ENCODE measurements at regions of chr15 and their contacts with region 1.

Region 1: GRCh38 chr15:59917504-59918157 is 86.5 kb upstream of the FOXB1 start:
- DNase-seq: peak; percentile 67
- H3K4me3 Mint-ChIP-seq: no peak overlapping the region
- H3K27ac Mint-ChIP-seq: peak overlapping the region; percentile 1
- H3K4me1 Mint-ChIP-seq: peaks cover 27% of the 10 kb centered on the region
- H3K27me3 Mint-ChIP-seq: peaks cover 32% of the 10 kb centered on the region

Region 2: GRCh38 chr15:59725172-59725486 is 192.5 kb before region 1 on chr15:
- intact Hi-C with region 1: loop called (anchors 10 kb)
- DNase-seq: no peak
- H3K4me3 Mint-ChIP-seq: no peak overlapping the region
- H3K27ac Mint-ChIP-seq: no peak overlapping the region
- H3K4me1 Mint-ChIP-seq: no peaks in the 10 kb centered on the region
- H3K27me3 Mint-ChIP-seq: peaks cover 20% of the 10 kb centered on the region

Region 3: DNA sequence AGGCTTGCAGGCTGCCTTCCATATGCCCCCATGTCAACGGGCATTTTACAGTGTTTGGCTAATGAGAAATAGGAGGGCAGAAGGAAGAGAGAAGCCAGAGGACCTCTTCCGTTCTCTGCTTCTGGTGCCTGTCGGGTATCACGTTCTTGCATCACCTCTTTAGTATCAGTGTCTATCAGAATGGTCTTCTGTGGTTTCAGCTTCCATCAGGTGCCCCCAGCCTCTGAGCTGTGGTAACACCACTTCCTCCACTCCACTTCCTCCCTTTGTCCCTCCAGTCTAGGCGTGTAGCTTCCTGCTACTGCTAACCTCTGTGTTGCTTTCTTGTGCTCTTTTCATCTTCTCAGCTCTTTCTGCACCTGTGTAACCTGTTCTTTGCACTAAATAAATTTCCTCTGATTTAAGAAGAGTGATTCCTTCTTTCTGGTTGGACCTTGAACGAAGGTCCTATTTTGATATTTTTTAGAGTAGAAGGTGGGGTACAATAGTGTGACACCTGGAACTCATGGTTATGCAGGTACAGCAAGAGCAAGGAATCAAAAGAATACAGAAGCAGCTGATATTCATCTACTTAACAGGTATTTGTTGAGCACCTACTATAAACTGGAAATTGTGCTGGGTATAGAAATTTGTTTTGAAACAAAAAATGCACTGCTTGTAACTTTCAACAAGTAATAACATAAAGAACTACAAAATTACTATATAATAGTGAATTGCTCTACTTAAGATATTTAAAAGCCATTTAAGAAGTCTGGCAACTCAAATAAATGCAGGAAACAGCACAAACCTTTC is 59.0 kb after region 1 on chr15:
- intact Hi-C with region 1: loop called (anchors 5 kb)
- DNase-seq: peak; percentile 62
- H3K4me3 Mint-ChIP-seq: peak overlapping the region; percentile 61
- H3K27ac Mint-ChIP-seq: peak overlapping the region; percentile 85
- H3K4me1 Mint-ChIP-seq: peaks cover 36% of the 10 kb centered on the region
- H3K27me3 Mint-ChIP-seq: peaks cover 8% of the 10 kb centered on the region

Region 4: DNA sequence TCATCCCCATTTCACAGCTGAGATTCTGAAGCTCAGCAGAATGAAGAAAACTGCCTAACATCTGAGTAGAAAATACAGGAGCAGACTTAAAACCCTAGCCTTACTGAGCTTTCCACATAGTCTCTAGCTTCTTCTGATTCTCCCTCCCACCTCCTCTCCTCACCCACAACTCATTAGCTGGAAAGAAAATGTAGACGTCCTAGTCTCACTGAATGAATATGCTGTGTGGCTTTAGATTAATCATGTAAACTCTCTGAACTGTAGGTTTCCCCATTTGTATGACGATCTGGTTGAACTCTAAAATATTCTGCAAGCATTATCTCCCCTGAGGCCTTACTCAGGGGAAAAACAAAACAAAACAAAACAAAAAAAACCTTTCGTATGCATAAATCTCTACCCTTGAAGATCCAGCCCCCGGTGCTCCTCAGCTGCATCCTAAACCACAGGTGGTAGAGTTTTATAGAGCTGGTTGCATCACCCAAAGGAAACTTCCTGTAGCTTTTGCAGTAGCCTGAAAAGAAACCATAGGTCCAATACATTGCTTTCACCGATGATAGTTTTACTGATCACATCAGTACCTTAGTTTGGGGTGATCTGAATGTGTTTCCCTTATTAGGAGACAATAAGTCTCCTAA is 127.1 kb after region 1 on chr15:
- intact Hi-C with region 1: loop called (anchors 1 kb)
- DNase-seq: peak; percentile 39
- H3K4me3 Mint-ChIP-seq: peak overlapping the region; percentile 6
- H3K27ac Mint-ChIP-seq: peak overlapping the region; percentile 54
- H3K4me1 Mint-ChIP-seq: peaks cover 24% of the 10 kb centered on the region
- H3K27me3 Mint-ChIP-seq: no peaks in the 10 kb centered on the region

Region 5: GRCh38 chr15:60179786-60180391 is 262.3 kb after region 1 on chr15:
- intact Hi-C with region 1: loop called (anchors 1 kb)
- DNase-seq: no peak
- H3K4me3 Mint-ChIP-seq: no peak overlapping the region
- H3K27ac Mint-ChIP-seq: no peak overlapping the region
- H3K4me1 Mint-ChIP-seq: no peaks in the 10 kb centered on the region
- H3K27me3 Mint-ChIP-seq: peaks cover 30% of the 10 kb centered on the region

Region 6: GRCh38 chr15:60548101-60548500 is 630.5 kb after region 1 on chr15:
- intact Hi-C with region 1: loop called (anchors 10 kb)
- DNase-seq: peak; percentile 54
- H3K4me3 Mint-ChIP-seq: peak overlapping the region; percentile 51
- H3K27ac Mint-ChIP-seq: peak overlapping the region; percentile 93
- H3K4me1 Mint-ChIP-seq: peaks cover 96% of the 10 kb centered on the region
- H3K27me3 Mint-ChIP-seq: no peaks in the 10 kb centered on the region